PC-3 (cell line): ENCODE measurements at regions of chr7 and their contacts with region 1.

Region 1: GRCh38 chr7:119964788-119965542 is 308.0 kb upstream of the KCND2 start:
- DNase-seq: peak; percentile 64
- ATAC-seq: peak; percentile 87
- H3K4me3 ChIP-seq: no peak overlapping the region
- H3K27ac ChIP-seq: no peak overlapping the region
- H3K4me1 ChIP-seq: peaks cover 32% of the 10 kb centered on the region
- H3K27me3 ChIP-seq: no peaks in the 10 kb centered on the region
- CTCF ChIP-seq: no peak

Region 2: GRCh38 chr7:120170834-120171233 is 205.9 kb after region 1 on chr7:
- CTCF ChIA-PET with region 1: no interaction called
- POLR2A ChIA-PET with region 1: no interaction called
- intact Hi-C with region 1: loop called (anchors 10 kb)
- DNase-seq: peak; percentile 39
- ATAC-seq: peak; percentile 65
- H3K4me3 ChIP-seq: no peak overlapping the region
- H3K27ac ChIP-seq: peak overlapping the region; percentile 32
- H3K4me1 ChIP-seq: peaks cover 24% of the 10 kb centered on the region
- H3K27me3 ChIP-seq: no peaks in the 10 kb centered on the region
- CTCF ChIP-seq: no peak

Region 3: GRCh38 chr7:120259158-120259785 is 294.3 kb after region 1 on chr7:
- CTCF ChIA-PET with region 1: no interaction called
- POLR2A ChIA-PET with region 1: no interaction called
- intact Hi-C with region 1: loop called (anchors 10 kb)
- DNase-seq: peak; percentile 53
- ATAC-seq: peak; percentile 86
- H3K4me3 ChIP-seq: no peak overlapping the region
- H3K27ac ChIP-seq: peak overlapping the region; percentile 49
- H3K4me1 ChIP-seq: peaks cover 5% of the 10 kb centered on the region; the same call in 1 of the 2 replicates
- H3K27me3 ChIP-seq: no peaks in the 10 kb centered on the region
- CTCF ChIP-seq: no peak